CD8-positive, alpha-beta T cell (primary cell): ENCODE measurements at regions of chr19 and their contacts with region 1.

Region 1: GRCh38 chr19:19515764-19516519 is at the start of gene NDUFA13:
- DNase-seq: peak; percentile 87 to 99 (median 94)
- ATAC-seq: peak; percentile 89
- H3K4me3 ChIP-seq: peak within 1 kb of the TSS; percentile 94 to 99
- H3K4me3 Mint-ChIP-seq: peak within 1 kb of the TSS; percentile 97
- H3K27ac ChIP-seq: peak within 1 kb of the TSS; percentile 80 to 87
- H3K27ac Mint-ChIP-seq: peak within 1 kb of the TSS; percentile 96
- H3K4me1 ChIP-seq: peaks cover 23% of the 10 kb centered on the region
- H3K4me1 Mint-ChIP-seq: peaks cover 30% of the 10 kb centered on the region
- H3K27me3 ChIP-seq: no peaks in the 10 kb centered on the region
- H3K27me3 Mint-ChIP-seq: no peaks in the 10 kb centered on the region
- CTCF ChIP-seq: no peak
- total RNA-seq, gene NDUFA13: 151 to 166 TPM

Region 2: GRCh38 chr19:19063183-19064097 is 452.5 kb before region 1 on chr19 and contains the start of gene SLC25A42:
- CTCF ChIA-PET with region 1: interaction called, 5 read pairs
- POLR2A ChIA-PET with region 1: no interaction called
- intact Hi-C with region 1: loop called in 1 of 2 experiments (anchors 10 kb)
- DNase-seq: peak; percentile 97 to 100 (median 99)
- ATAC-seq: peak; percentile 90
- H3K4me3 ChIP-seq: peak within 1 kb of the TSS; percentile 61 to 87
- H3K4me3 Mint-ChIP-seq: peak within 1 kb of the TSS; percentile 89
- H3K27ac ChIP-seq: peak within 1 kb of the TSS; percentile 47 to 77
- H3K27ac Mint-ChIP-seq: peak within 1 kb of the TSS; percentile 88
- H3K4me1 ChIP-seq: peaks cover 23% of the 10 kb centered on the region
- H3K4me1 Mint-ChIP-seq: peaks cover 32% of the 10 kb centered on the region
- H3K27me3 ChIP-seq: no peaks in the 10 kb centered on the region
- H3K27me3 Mint-ChIP-seq: no peaks in the 10 kb centered on the region
- CTCF ChIP-seq: no peak
- total RNA-seq, gene SLC25A42: 8.3 to 10.6 TPM

Region 3: GRCh38 chr19:19404879-19405860 is 110.8 kb before region 1 on chr19 and contains the start of gene GATAD2A:
- CTCF ChIA-PET with region 1: no interaction called
- POLR2A ChIA-PET with region 1: interaction called, 4 read pairs
- intact Hi-C with region 1: loop called in 1 of 2 experiments (anchors 1 kb)
- DNase-seq: peak; percentile 81 to 98 (median 92)
- ATAC-seq: peak; percentile 89
- H3K4me3 ChIP-seq: peak within 1 kb of the TSS; percentile 67 to 85
- H3K4me3 Mint-ChIP-seq: peak within 1 kb of the TSS; percentile 97
- H3K27ac ChIP-seq: peak within 1 kb of the TSS; percentile 70 to 86
- H3K27ac Mint-ChIP-seq: peak within 1 kb of the TSS; percentile 89
- H3K4me1 ChIP-seq: peaks cover 44% of the 10 kb centered on the region
- H3K4me1 Mint-ChIP-seq: peaks cover 62% of the 10 kb centered on the region
- H3K27me3 ChIP-seq: no peaks in the 10 kb centered on the region
- H3K27me3 Mint-ChIP-seq: no peaks in the 10 kb centered on the region
- CTCF ChIP-seq: no peak
- total RNA-seq, gene GATAD2A: 135 to 142 TPM

Region 4: DNA sequence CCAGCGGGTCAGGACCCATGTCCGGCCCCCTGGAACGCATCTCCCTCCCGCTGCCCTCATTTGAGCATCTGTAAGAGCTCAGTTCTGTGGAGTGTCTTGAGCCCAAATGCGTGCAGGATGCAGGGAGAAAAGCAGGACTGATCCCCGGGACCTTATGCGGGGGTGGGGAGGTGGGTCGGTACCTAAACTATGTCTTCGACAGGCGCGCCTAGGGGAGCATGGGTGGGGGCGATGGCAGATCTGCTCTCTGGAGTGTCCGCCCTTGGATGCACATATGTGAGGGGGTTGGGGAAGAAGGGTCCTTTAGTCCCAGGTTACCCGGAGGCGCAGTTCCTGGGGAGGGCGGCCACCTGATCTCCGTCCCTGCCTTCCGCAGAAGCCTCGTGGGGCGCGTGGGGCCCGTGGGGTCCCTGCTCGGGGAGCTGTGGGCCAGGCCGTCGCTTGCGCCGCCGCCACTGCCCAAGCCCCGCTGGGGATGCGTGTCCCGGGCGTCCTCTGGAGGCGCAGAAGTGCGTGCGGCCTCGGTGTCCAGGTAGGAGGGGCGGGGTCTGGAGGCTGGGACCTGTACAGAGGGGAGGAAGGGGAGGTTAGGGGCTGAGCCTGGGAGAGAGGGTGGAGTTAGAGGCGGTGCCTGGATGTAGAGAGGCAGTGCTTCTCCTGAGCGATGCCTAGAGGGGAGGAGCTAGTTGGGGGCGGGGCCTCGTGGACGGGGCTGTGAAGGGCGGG is 24.9 kb after region 1 on chr19:
- CTCF ChIA-PET with region 1: no interaction called
- POLR2A ChIA-PET with region 1: no interaction called
- intact Hi-C with region 1: loop called in 1 of 2 experiments (anchors 2 kb)
- DNase-seq: peak; percentile 46 to 82 (median 76)
- ATAC-seq: peak; percentile 76
- H3K4me3 ChIP-seq: peak overlapping the region; percentile 32 to 58
- H3K4me3 Mint-ChIP-seq: peak overlapping the region; percentile 69
- H3K27ac ChIP-seq: no peak overlapping the region
- H3K27ac Mint-ChIP-seq: peak overlapping the region; percentile 18
- H3K4me1 ChIP-seq: peaks cover 39% of the 10 kb centered on the region
- H3K4me1 Mint-ChIP-seq: peaks cover 27% of the 10 kb centered on the region
- H3K27me3 ChIP-seq: peaks cover 0 to 2% of the 10 kb centered on the region in 2 experiments
- H3K27me3 Mint-ChIP-seq: no peaks in the 10 kb centered on the region
- CTCF ChIP-seq: no peak

Region 5: GRCh38 chr19:19643158-19644053 is 127.5 kb after region 1 on chr19 and contains the start of gene GMIP:
- CTCF ChIA-PET with region 1: interaction called, 4 read pairs
- POLR2A ChIA-PET with region 1: no interaction called
- intact Hi-C with region 1: loop called in 1 of 2 experiments (anchors 5 kb)
- DNase-seq: peak; percentile 79 to 96 (median 91)
- ATAC-seq: peak; percentile 93
- H3K4me3 ChIP-seq: peak within 1 kb of the TSS; percentile 100
- H3K4me3 Mint-ChIP-seq: peak within 1 kb of the TSS; percentile 95
- H3K27ac ChIP-seq: peak within 1 kb of the TSS; percentile 92 to 93
- H3K27ac Mint-ChIP-seq: peak within 1 kb of the TSS; percentile 93
- H3K4me1 ChIP-seq: peaks cover 20% of the 10 kb centered on the region
- H3K4me1 Mint-ChIP-seq: peaks cover 20% of the 10 kb centered on the region
- H3K27me3 ChIP-seq: no peaks in the 10 kb centered on the region
- H3K27me3 Mint-ChIP-seq: no peaks in the 10 kb centered on the region
- CTCF ChIP-seq: peak; percentile 83
- total RNA-seq, gene GMIP: 82.7 to 85.7 TPM

Region 6: DNA sequence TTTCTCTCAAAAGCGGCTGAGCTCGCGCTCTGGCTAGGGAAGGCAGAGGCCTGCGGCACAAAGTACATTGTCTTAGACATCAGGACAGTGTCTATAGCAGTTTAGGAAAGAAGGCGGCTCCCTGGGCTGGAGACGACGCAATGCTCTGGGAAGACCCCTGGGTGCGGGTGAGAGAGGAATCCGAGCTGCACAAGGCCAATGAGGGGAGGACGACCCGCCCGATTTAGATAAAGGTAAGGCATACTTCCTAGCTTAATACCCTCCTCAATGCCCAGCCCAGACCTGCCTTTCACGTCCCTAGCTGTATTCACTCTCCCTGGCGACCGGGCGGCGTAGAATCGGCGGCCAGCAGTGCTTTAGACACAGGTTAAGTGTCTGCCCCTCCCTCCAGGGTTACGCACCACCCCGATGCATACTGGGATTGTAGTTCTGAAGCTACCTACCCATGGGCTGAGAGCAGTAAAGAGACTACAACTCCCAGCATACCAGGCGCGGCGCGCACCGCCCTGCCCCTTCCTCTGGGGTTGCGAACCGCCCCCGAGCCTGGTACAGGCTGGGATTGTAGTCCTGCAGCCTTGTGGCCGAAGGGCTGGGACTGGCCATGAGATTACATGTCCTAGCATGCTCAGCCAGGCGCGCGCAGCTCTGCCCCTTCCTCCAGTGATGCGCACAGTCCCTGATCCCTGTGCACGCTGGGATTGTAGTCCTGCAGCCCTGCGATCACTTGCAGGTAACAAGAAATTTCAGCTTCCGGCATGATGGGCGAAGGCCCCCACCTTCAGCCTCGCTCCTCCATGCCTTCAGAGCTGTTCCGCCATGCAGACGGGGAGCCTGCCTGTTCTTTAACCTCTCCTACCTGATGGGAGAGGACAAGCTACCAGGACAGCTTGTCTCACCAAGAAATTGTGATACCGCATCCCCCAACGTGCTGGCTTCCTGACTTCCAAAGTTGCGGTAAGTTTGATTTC is 260.4 kb after region 1 on chr19:
- CTCF ChIA-PET with region 1: no interaction called
- POLR2A ChIA-PET with region 1: no interaction called
- intact Hi-C with region 1: loop called in 1 of 2 experiments (anchors 1 kb)
- DNase-seq: peak; percentile 81 to 96 (median 92)
- ATAC-seq: peak; percentile 99
- H3K4me3 ChIP-seq: peak overlapping the region; percentile 60 to 81
- H3K4me3 Mint-ChIP-seq: peak overlapping the region; percentile 97
- H3K27ac ChIP-seq: peak overlapping the region; percentile 42 to 71
- H3K27ac Mint-ChIP-seq: peak overlapping the region; percentile 98
- H3K4me1 ChIP-seq: peaks cover 17% of the 10 kb centered on the region
- H3K4me1 Mint-ChIP-seq: peaks cover 65% of the 10 kb centered on the region
- H3K27me3 ChIP-seq: no peaks in the 10 kb centered on the region
- H3K27me3 Mint-ChIP-seq: no peaks in the 10 kb centered on the region
- CTCF ChIP-seq: no peak